ENCODE measurements at regions of chr3 and their contacts with region 1.

Region 1: DNA sequence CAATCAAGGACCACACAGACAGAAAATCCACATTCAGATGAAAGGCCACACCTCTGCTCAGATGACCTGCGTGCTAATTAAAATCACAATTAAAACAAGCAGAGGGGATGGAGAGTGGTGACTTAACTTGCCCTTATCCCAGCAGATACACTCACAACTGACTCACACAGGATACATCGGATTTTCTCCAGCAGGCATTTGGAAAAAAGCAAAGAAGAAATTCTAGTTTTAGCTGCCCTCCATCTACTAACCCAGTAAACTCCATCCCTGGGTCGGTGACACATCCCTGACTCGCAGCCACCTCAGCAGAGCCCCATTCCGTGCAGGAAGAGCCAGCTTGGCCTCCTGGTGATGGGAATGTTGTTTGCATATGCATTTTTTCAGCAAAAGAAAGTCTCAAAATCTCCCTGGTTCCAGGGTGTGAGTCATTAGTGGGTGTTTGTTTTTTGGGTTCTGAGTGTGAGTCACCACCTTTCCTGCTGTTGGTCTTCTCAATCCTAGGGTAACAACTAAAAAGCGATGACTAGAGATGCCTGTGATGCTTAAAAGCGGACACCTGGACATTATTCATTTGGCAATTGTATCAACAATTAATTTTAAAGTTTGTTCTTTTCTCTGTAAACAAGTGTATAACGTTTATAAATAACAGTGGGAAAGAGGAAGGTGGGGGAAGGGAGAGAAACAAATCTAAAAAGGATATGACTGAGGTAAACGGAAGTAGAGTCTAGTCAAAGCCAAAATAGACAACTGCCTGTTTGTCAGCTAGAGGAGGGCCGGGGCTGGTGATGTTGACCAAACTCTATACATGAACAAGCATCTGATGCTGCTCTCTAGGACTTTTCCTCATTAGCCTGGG is 49.8 kb upstream of the SLC4A7 start:
- DNase-seq: peak; percentile 99
- ATAC-seq: peak; percentile 93
- H3K4me3 ChIP-seq: no peak overlapping the region
- H3K27ac ChIP-seq: peak overlapping the region; percentile 77
- H3K4me1 ChIP-seq: peaks cover 21% of the 10 kb centered on the region
- H3K27me3 ChIP-seq: no peaks in the 10 kb centered on the region
- CTCF ChIP-seq: peak; percentile 76
- POLR2A ChIP-seq: no peak
- RAD21 ChIP-seq: peak; percentile 72

Region 2: GRCh38 chr3:27681245-27681748 is 147.4 kb after region 1 on chr3:
- CTCF ChIA-PET with region 1: interaction called, 8 read pairs
- POLR2A ChIA-PET with region 1: no interaction called
- dilution Hi-C with region 1: no loop called
- in situ Hi-C with region 1: no loop called
- intact Hi-C with region 1: loop called (anchors 1 kb)
- DNase-seq: peak; percentile 83
- ATAC-seq: peak; percentile 52
- H3K4me3 ChIP-seq: peak overlapping the region; percentile 28; the same call in 1 of the 2 replicates
- H3K27ac ChIP-seq: peak overlapping the region; percentile 55; the same call in 1 of the 2 replicates
- H3K4me1 ChIP-seq: peaks cover 10% of the 10 kb centered on the region
- H3K27me3 ChIP-seq: no peaks in the 10 kb centered on the region
- CTCF ChIP-seq: peak; percentile 81
- POLR2A ChIP-seq: no peak
- RAD21 ChIP-seq: peak; percentile 72